B cell (primary cell): ENCODE measurements at regions of chr2 and their contacts with region 1.

Region 1: DNA sequence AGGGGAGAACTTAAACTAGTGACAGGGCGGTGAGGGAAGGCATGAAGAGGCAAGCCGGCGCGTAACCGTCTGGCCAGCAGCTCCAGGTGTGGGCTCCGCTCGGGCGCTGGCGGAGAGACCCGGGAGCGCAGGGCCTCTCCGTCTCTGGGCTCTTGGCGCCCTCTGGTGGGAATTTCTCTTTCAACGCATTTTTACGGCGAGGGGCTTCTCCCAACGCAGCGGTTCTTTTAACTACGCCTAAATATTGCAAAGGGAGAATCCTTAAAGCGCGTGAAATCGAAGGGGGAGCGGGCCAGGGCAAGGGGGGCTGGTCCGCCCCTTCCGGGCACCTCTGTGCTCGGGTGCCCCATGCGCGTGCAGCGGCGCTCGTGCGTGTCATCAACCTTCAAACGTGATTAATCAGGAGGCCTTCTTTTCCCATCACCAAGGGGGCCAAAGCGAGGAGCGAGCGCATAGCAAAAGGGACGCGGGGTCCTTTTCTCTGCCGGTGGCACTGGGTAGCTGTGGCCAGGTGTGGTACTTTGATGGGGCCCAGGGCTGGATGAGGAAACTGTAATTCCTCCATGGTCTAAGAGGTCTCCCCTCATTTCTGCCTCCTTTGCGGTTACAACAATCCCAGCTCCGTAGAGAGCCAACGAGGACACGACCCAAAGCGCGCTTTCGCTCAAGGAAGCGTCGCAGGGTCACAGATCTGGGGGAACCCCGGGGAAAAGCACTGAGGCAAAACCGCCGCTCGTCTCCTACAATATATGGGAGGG is 762 bp upstream of the GAD1 start:
- DNase-seq: peak; percentile 76
- ATAC-seq: peak; percentile 40
- H3K4me3 ChIP-seq: peak overlapping the region; percentile 21 to 49 (median 45)
- H3K4me3 Mint-ChIP-seq: peak overlapping the region; percentile 63
- H3K27ac ChIP-seq: no peak overlapping the region
- H3K27ac Mint-ChIP-seq: no peak overlapping the region
- H3K4me1 ChIP-seq: peaks cover 53 to 66% of the 10 kb centered on the region in 2 donors
- H3K4me1 Mint-ChIP-seq: peaks cover 50% of the 10 kb centered on the region
- H3K27me3 ChIP-seq: peaks cover 0 to 81% (median 65%) of the 10 kb centered on the region in 4 experiments
- H3K27me3 Mint-ChIP-seq: peaks cover 73% of the 10 kb centered on the region
- CTCF ChIP-seq: peak; percentile 67

Region 2: GRCh38 chr2:170022692-170023091 is 793.2 kb before region 1 on chr2:
- CTCF ChIA-PET with region 1: no interaction called
- POLR2A ChIA-PET with region 1: no interaction called
- intact Hi-C with region 1: no loop called
- DNase-seq: no peak
- ATAC-seq: no peak
- H3K4me3 ChIP-seq: no peak overlapping the region
- H3K4me3 Mint-ChIP-seq: no peak overlapping the region
- H3K27ac ChIP-seq: no peak overlapping the region
- H3K27ac Mint-ChIP-seq: no peak overlapping the region
- H3K4me1 ChIP-seq: no peaks in the 10 kb centered on the region
- H3K4me1 Mint-ChIP-seq: no peaks in the 10 kb centered on the region
- H3K27me3 ChIP-seq: no peaks in the 10 kb centered on the region
- H3K27me3 Mint-ChIP-seq: no peaks in the 10 kb centered on the region
- CTCF ChIP-seq: no peak

Region 3: DNA sequence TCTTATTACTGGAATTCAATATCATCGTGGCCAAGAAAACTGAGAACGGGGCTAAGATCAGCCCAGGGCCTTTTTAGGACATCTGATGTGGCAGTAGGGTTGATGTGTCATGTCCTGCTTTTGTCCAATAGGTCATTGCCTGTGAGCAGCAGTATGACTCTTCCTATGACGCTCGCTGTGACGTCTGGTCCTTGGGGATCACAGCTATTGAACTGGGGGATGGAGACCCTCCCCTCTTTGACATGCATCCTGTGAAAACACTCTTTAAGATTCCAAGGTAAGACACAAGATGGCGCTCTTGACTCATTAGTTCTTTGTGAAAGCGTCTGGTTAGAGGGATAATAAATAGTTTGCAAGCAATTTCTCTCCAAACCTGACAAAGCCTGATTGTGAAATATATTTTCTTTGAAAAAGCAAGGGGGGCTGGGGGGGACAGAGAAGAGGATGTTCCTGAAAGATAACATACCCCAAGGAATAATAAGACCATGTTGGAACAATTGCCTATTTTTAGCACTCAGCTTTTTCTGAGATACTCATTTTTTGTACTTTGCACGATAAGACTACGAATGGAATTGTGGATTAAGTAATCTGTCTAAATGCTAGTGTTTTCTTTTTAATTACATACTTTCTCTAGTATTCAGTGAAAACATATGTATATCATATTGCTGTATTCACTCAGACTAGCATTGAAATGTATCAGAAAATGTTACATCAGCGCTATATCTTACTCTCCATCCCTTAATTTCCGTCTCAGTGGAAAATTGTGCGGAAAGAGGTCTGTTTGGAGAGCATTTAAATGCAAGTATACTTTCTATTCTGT is 579.9 kb before region 1 on chr2:
- CTCF ChIA-PET with region 1: no interaction called
- POLR2A ChIA-PET with region 1: no interaction called
- intact Hi-C with region 1: loop called (anchors 10 kb)
- DNase-seq: peak; percentile 8
- ATAC-seq: no peak
- H3K4me3 ChIP-seq: no peak overlapping the region
- H3K4me3 Mint-ChIP-seq: no peak overlapping the region
- H3K27ac ChIP-seq: no peak overlapping the region
- H3K27ac Mint-ChIP-seq: no peak overlapping the region
- H3K4me1 ChIP-seq: no peaks in the 10 kb centered on the region
- H3K4me1 Mint-ChIP-seq: no peaks in the 10 kb centered on the region
- H3K27me3 ChIP-seq: no peaks in the 10 kb centered on the region
- H3K27me3 Mint-ChIP-seq: peaks cover 11% of the 10 kb centered on the region
- CTCF ChIP-seq: no peak

Region 4: GRCh38 chr2:170409164-170409535 is 406.8 kb before region 1 on chr2:
- CTCF ChIA-PET with region 1: interaction called, 18 read pairs
- POLR2A ChIA-PET with region 1: no interaction called
- intact Hi-C with region 1: no loop called
- DNase-seq: peak; percentile 55
- ATAC-seq: no peak
- H3K4me3 ChIP-seq: no peak overlapping the region
- H3K4me3 Mint-ChIP-seq: no peak overlapping the region
- H3K27ac ChIP-seq: no peak overlapping the region
- H3K27ac Mint-ChIP-seq: no peak overlapping the region
- H3K4me1 ChIP-seq: peaks cover 12 to 14% of the 10 kb centered on the region in 2 donors
- H3K4me1 Mint-ChIP-seq: peaks cover 11% of the 10 kb centered on the region
- H3K27me3 ChIP-seq: peaks cover 0 to 21% (median 6%) of the 10 kb centered on the region in 4 experiments
- H3K27me3 Mint-ChIP-seq: peaks cover 41% of the 10 kb centered on the region
- CTCF ChIP-seq: peak; percentile 83

Region 5: DNA sequence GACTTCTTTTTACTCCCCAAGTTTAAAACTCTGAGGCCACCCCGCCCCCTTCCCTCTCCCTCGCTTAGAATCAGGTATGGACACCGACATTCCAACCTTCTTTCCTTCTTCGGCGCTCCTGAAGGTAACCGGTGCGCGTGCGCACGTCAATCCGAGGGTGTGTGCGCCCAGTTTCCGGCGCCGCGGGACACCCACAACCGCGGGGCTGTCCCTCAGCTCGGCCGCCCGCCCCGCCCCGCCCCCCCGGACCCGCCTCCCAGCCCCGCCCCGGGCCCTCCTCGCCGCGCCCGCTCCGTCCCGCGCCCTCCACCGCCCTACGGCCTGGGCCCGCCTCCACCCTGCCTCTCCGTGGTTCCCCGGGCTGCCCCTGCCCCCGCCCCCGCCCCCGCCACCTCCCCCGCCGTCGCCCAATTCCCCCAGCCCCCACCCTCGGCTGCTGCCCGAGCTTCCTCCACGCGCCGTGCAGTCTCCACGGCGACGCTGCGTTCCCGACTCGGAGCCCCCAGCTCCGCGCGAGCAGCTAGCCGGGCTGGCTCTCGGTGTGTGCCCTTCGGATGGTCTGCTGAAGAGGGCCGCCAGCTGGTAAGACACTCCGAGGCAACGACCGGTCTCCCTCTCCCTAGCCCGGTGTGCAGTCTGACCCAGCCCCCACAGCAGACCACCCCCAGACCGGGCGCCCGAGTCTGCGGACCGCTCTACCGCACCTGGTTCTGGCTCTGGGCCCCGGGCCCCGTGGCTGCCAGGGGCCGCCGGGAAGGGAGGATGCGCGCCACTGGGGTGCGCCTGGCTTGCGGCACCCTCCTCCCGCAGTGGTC is 45.1 kb before region 1 on chr2:
- CTCF ChIA-PET with region 1: interaction called, 3 read pairs
- POLR2A ChIA-PET with region 1: no interaction called
- intact Hi-C with region 1: loop called (anchors 5 kb)
- DNase-seq: peak; percentile 67
- ATAC-seq: peak; percentile 88
- H3K4me3 ChIP-seq: peak overlapping the region; percentile 32 to 75 (median 67)
- H3K4me3 Mint-ChIP-seq: peak overlapping the region; percentile 87
- H3K27ac ChIP-seq: no peak overlapping the region
- H3K27ac Mint-ChIP-seq: peak overlapping the region; percentile 32
- H3K4me1 ChIP-seq: peaks cover 12 to 17% of the 10 kb centered on the region in 2 donors
- H3K4me1 Mint-ChIP-seq: peaks cover 11% of the 10 kb centered on the region
- H3K27me3 ChIP-seq: peaks cover 0 to 16% (median 4%) of the 10 kb centered on the region in 4 experiments
- H3K27me3 Mint-ChIP-seq: peaks cover 34% of the 10 kb centered on the region
- CTCF ChIP-seq: no peak